Astrocyte of the cerebellum (primary cell): ENCODE measurements at regions of chr17 and their contacts with region 1.

Region 1: DNA sequence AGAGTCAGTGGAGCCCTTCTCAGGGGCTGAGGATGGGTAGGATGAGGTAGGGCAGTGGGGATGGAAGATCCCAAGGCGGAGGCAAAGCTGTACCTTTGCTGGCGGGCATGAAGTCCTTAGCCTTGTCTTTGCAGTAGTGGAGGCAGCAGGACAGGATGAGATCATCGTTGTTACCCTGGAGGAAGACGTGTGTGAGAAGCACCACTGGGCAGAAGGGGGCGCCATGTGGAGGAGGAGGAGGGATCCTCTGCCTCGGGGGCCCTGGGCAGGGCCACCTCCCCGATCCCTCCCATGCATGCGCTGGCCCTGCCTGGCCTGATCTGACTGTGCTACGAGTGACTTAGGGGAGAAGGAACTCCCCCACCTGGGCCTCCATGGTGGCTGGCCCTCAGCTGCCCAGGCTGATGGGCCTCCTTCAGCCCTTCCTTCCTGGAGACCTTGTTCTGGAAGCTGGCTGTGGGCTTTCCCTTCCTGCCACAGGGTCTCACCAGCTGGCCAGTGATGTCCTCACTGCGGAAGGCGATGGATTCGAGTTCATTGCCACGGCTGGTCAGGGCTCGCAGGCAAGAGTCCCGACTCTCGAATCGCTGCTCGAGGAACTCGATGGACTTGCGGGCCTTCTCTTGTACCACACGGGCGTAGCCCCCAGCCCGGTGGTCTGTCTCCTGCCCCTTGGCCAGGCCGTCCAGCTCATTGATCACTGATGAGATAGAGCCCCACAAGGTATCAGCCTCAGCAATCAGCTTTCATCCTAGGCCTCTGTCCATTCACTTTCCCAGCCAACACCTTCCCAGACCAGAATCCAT is 10.3 kb downstream of the HIC1 start:
- DNase-seq: no peak
- H3K4me3 ChIP-seq: no peak overlapping the region
- CTCF ChIP-seq: peak; percentile 46

Region 2: DNA sequence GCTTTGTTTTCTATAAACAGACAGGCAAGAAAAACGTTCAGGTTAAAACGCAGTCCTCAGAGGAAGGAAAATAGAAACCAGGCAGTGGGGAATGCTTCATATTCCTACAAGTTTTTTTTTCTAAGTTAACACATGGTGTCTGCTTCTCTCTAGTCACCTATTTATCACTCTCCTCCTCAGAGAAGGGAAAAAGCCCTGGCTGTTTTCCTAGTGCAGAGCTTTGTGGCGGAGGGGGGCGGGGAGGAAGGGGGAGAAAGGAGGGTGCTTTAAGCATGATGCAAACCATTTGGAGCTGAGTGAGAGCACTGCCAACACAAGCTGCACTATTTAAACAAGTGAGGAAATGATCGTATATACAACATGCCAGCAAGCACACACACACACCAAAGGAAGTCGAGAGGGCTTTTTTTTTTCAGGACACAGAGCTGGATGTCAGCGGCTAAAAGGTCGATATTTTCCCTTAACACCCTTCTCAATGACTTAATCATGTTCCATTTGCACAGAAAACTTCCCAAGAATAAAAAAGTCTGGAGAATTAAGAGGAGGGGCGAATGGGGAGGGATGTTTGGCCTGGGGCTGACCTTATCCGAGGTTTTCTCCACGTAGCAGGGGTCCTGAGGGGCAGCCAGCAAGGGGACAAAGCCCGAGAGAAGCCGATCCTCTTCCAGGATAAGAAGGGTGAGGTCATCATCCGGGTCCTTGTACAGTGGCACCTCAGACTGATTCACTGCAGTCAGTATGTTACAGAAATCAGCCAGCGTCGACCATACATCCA is 107.1 kb after region 1 on chr17:
- in situ Hi-C with region 1: loop called (anchors 10 kb)
- DNase-seq: peak; percentile 94
- H3K4me3 ChIP-seq: no peak overlapping the region
- CTCF ChIP-seq: no peak

Region 3: DNA sequence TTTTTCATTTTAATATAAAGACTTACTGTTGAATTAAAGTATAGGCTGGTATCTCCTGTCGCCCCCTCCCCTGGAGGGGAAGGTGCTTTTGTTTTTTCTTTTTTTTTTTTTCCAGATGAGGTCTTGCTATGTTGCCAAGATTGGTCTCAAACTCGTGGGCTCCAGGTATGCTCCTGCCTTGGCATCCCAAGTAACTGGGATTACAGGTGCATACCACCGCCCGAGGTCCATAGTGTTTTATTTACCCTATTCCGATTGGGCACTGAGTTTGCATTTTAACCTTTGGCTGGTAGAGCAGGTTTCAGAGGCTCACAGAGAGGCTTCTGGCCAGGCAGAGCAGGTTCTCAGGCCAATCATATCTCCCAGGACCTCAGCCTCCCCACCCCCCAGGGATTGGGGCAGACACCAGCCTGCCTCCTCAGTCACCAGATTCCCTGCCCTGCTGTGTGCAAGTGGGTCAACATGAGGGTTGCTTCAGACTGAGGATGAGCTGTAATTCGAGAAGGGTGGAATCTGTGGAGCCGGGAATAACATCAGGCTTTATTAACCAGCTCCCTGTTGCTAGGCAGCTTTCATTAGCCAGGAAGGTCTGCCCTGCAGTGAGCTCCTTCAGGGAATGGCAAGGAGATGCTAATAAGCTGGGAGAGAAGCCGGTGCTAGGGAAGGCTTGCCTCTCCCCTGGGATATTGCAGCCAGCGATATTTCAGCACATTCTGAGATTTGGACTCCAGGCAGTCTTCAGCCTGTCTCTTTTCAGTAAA is 282.5 kb after region 1 on chr17:
- in situ Hi-C with region 1: no loop called
- DNase-seq: no peak
- H3K4me3 ChIP-seq: no peak overlapping the region
- CTCF ChIP-seq: no peak